ENCODE measurements at regions of chr1 and their contacts with region 1.

Region 1: DNA sequence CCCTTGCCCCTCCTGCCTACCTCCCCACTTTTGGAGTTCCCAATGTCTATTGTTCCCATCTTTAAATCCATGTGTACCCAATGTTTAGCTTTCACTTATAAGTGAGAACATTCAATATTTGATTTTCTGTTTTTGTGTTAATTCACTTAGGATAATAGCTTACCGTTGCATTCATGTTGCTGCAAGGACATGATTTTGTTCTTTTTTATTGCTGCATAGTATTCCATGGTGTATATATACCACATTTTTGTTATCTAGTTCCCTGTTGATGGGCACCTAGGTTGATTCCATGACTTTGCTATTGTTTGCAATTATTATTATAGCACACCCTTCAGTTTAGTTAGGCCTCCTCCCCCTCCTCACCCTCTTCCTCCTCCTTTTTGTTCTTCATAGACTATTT is 33.5 kb upstream of the ADAR start:
- DNase-seq: no peak
- ATAC-seq: no peak
- H3K4me3 ChIP-seq: no peak overlapping the region
- H3K27ac ChIP-seq: no peak overlapping the region
- H3K4me1 ChIP-seq: no peaks in the 10 kb centered on the region
- H3K27me3 ChIP-seq: no peaks in the 10 kb centered on the region
- CTCF ChIP-seq: no peak

Region 2: DNA sequence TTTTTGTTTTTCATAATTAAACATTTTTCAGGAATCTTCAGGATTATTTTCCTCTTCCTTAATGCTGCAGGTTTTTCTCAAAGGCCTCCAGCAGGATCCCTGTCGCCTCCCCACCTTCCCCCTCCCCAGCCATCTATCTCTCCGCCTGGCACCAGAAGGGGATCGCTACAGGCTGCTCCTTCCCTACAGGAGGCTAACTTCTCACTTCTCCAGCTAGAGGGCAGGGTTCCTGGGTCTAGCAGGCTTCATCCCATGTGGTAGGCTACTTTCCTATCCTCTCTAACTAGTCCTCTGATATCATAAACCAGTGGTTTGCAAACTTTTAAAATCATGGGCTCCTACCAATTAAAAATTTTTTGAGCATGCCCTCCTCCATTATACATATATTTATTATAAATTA is 124.4 kb after region 1 on chr1:
- CTCF ChIA-PET with region 1: no interaction called
- POLR2A ChIA-PET with region 1: interaction called, 11 read pairs
- in situ Hi-C with region 1: no loop called
- intact Hi-C with region 1: no loop called
- DNase-seq: no peak
- ATAC-seq: peak; percentile 92
- H3K4me3 ChIP-seq: no peak overlapping the region
- H3K27ac ChIP-seq: no peak overlapping the region
- H3K4me1 ChIP-seq: no peaks in the 10 kb centered on the region
- H3K27me3 ChIP-seq: peaks cover 37% of the 10 kb centered on the region
- CTCF ChIP-seq: peak; percentile 74